K562 (cell line): ENCODE measurements at regions of chr1 and their contacts with region 1.

Region 1: DNA sequence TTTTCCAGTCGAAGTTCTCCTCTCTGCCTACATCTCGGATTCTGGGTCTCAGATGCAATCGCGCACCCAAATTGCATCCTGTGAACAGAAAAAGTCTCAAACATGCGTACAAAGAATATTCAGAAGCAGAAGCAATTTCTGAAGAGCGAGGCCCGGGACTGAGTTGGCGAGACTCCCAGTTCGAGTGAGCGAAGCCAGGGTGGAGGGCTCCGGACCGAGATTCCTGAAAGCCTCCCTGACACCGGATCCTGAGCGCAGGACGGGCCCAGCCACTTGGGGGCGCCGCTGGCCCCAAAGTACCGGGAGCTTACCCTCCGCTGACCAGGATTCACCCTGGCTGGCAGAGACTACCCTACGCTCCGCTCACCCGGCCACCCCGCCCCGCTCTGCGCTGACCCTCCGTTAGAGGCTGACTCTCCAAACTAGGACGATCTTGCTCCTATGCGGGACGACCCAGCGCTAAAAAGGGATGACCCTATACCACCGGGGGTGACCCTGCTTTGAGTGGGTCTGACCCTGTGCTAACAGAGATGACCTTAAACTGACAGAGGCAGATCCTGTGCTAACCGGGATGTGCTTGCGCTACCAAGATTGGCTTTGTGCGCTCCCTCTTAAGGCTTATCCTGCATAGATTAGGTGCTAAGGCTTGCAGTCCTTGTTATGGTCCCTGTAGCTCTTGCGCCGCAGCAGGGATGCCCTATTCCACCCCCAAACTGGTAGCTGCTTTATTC is 12.1 kb downstream of the FOXD2 start:
- DNase-seq: peak; percentile 57 to 80 (median 75)
- ATAC-seq: peak; percentile 90
- H3K4me3 ChIP-seq: no peak overlapping the region
- H3K27ac ChIP-seq: no peak overlapping the region
- H3K4me1 ChIP-seq: peaks cover 0 to 6% of the 10 kb centered on the region in 2 experiments; a peak in 2 of 5 replicates
- H3K27me3 ChIP-seq: peaks cover 52 to 60% of the 10 kb centered on the region in 2 experiments
- CTCF ChIP-seq: peak; percentile 74 to 78 (median 76)
- EP300 ChIP-seq: no peak
- POLR2A ChIP-seq: no peak
- RAD21 ChIP-seq: peak in 1 of 2 experiments; percentile 67; a peak in 3 of 4 replicates

Region 2: DNA sequence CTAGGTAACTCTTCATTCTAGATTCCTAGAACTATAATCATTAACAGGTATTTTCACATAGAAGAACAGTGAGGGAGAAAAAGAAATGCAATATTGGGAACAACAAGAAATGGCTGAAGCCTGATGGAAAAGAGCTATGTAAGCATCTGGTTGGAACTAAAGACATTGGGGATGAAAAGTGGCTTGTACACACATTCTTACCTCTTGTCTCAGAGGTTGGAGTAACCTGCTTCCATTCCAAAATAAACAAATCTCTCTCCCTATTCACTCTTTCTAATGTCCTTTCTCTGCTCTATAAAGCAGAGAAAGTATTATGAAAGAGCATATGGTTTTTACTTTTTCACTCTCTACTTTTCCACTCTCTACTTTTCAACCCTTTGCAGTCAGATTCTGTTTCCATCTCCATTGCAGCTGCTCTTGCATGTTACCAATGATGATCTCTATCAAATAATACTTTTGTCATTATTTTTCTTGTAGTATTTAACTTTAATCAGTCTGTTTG is 78.9 kb before region 1 on chr1:
- CTCF ChIA-PET with region 1: no interaction called
- POLR2A ChIA-PET with region 1: no interaction called
- in situ Hi-C with region 1: no loop called
- intact Hi-C with region 1: no loop called
- DNase-seq: no peak
- ATAC-seq: no peak
- H3K4me3 ChIP-seq: no peak overlapping the region
- H3K27ac ChIP-seq: no peak overlapping the region
- H3K4me1 ChIP-seq: no peaks in the 10 kb centered on the region
- H3K27me3 ChIP-seq: no peaks in the 10 kb centered on the region
- CTCF ChIP-seq: no peak
- EP300 ChIP-seq: no peak
- POLR2A ChIP-seq: no peak
- RAD21 ChIP-seq: no peak

Region 3: DNA sequence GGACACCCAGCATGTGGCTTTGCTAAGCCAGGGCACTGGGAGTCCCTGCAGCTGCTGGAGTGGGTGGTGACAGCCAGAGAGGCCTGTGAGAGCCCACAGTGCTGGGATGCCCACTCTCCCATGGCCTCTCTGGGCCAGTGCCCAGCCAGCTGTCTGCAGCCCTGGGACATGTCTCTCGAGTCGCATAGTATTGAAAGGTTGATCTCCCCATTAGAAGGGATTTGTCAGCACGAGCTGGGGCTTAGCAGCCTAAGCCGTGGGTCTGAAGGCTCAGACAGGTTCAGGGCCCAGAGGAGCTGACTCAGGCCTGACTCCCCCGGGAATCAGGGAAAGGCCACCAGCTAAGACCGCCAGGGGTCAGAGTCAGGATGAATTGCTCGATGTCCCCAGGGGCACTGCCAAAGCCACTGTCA is 41.4 kb after region 1 on chr1:
- CTCF ChIA-PET with region 1: no interaction called
- POLR2A ChIA-PET with region 1: no interaction called
- in situ Hi-C with region 1: no loop called
- intact Hi-C with region 1: no loop called
- DNase-seq: peak in 3 of 4 experiments; percentile 12 to 47 (median 35)
- ATAC-seq: peak; percentile 69
- H3K4me3 ChIP-seq: no peak overlapping the region
- H3K27ac ChIP-seq: no peak overlapping the region
- H3K4me1 ChIP-seq: no peaks in the 10 kb centered on the region
- H3K27me3 ChIP-seq: peaks cover 4 to 33% of the 10 kb centered on the region in 2 experiments; a peak in 4 of 5 replicates
- CTCF ChIP-seq: peak in 2 of 3 experiments; percentile 20 to 26; a peak in 2 of 6 replicates
- EP300 ChIP-seq: no peak
- POLR2A ChIP-seq: no peak
- RAD21 ChIP-seq: no peak; a peak in 1 of 4 replicates

Region 4: GRCh38 chr1:47515164-47515789 is 65.3 kb after region 1 on chr1:
- CTCF ChIA-PET with region 1: no interaction called
- POLR2A ChIA-PET with region 1: no interaction called
- in situ Hi-C with region 1: no loop called
- intact Hi-C with region 1: loop called (anchors 5 kb)
- DNase-seq: peak; percentile 28 to 69 (median 49)
- ATAC-seq: peak; percentile 93
- H3K4me3 ChIP-seq: no peak overlapping the region
- H3K27ac ChIP-seq: no peak overlapping the region
- H3K4me1 ChIP-seq: peaks cover 3 to 9% of the 10 kb centered on the region in 2 experiments; a peak in 3 of 5 replicates
- H3K27me3 ChIP-seq: peaks cover 4 to 32% of the 10 kb centered on the region in 2 experiments
- CTCF ChIP-seq: peak; percentile 40 to 61 (median 50)
- EP300 ChIP-seq: no peak
- POLR2A ChIP-seq: no peak
- RAD21 ChIP-seq: peak in 1 of 2 experiments; percentile 42; a peak in 2 of 4 replicates

Region 5: GRCh38 chr1:47618830-47619229 is 168.8 kb after region 1 on chr1:
- CTCF ChIA-PET with region 1: no interaction called
- POLR2A ChIA-PET with region 1: no interaction called
- in situ Hi-C with region 1: no loop called
- intact Hi-C with region 1: loop called (anchors 5 kb)
- DNase-seq: no peak
- ATAC-seq: no peak
- H3K4me3 ChIP-seq: no peak overlapping the region
- H3K27ac ChIP-seq: no peak overlapping the region
- H3K4me1 ChIP-seq: no peaks in the 10 kb centered on the region
- H3K27me3 ChIP-seq: peaks cover 0 to 21% of the 10 kb centered on the region in 2 experiments; a peak in 1 of 5 replicates
- CTCF ChIP-seq: no peak
- EP300 ChIP-seq: no peak
- POLR2A ChIP-seq: no peak
- RAD21 ChIP-seq: no peak

Region 6: DNA sequence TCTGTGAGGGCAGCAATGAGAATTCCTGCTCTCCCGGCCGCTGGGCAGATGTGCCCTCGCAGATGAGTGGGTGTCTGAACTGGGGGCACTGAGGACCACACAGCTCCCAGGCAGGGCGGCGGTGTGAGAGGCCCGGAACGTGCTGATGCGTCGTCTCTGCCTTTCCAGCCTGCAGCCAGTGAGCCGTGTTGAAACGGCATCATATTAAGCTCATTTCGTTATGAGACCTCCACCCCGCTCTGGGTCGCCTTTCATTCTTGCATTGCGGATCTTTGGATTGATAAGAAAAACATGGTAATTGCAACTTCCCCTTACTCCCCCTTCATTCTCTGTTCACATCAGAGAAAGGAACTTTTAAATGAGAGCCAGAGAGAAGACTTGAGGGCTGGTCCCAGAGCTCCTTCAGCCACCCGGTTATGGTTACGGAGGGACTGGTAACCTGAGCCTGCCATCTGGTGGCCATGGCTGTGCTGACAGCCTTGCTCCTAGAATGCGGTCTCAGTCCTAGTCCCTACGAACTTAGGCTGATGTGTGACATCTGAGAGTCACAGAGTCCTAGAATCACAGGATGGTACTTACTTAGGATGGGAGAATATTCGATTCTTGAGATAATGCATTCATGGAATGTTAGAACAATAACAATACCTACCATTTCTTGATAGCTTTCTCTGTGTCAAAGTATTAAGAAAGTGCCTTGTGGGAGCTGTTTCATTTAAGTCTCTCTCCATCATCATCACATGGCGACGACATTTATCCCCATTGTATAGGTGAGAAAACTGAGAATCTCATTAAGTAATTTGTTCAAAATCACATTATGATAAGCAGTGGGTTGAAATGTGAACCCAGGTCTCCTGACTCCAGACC is 276.2 kb after region 1 on chr1:
- CTCF ChIA-PET with region 1: interaction called, 3 read pairs
- POLR2A ChIA-PET with region 1: no interaction called
- in situ Hi-C with region 1: no loop called
- intact Hi-C with region 1: loop called (anchors 5 kb)
- DNase-seq: peak; percentile 80 to 86 (median 80)
- ATAC-seq: peak; percentile 98
- H3K4me3 ChIP-seq: no peak overlapping the region
- H3K27ac ChIP-seq: no peak overlapping the region
- H3K4me1 ChIP-seq: peaks cover 0 to 10% of the 10 kb centered on the region in 2 experiments; a peak in 1 of 5 replicates
- H3K27me3 ChIP-seq: peaks cover 15 to 59% of the 10 kb centered on the region in 2 experiments
- CTCF ChIP-seq: peak; percentile 87 to 96 (median 93)
- EP300 ChIP-seq: no peak
- POLR2A ChIP-seq: no peak
- RAD21 ChIP-seq: peak; percentile 69 to 91